ENCODE measurements at regions of chr9 and their contacts with region 1.

Region 1: DNA sequence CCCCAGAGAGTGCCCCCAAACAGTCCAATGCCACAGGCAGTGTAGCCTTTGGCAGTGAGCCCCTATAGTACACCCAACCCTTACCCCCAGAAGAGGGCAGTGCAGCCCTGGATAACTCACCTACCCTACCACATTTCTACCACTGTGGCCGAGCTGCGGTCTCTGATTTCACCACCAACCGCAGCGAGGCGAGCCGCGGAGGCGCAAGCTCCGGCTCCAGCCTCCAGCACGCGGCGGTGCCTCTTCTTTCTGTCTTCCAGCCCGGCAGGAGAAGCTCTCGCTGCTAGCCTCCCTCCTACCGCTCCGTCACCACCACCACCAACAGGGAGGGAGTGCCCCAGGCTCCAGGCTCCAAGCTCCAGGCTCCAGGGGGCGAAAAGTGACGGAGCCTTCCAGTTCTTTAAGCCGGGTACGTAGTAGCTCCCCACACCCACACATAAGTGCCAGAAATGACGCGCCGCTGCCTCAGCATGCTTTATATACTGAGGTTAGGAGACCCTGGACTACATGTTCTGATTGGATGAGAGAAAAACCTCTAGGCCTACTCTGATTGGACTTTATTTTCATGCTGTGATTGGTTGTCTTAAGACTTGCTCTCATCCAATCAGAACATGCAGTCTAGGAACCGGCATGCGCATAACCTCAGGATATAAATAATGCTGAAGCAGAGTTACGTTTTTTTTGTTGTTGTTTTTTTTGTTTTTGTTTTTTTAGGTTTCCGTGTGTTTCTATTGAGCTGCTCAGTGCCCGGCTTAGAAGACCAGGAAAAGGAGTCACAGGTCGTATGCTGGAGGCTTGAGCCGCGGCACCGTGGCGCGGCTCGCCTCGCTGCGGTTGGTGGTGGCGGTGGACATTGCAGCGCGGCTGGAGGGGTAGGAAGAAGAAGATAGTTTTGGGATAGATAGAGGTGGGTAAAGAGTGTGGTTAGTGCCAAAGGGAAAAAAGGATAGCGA is at the start of gene PCAT7:
- DNase-seq: peak; percentile 72 to 81 (median 74)
- ATAC-seq: peak; percentile 100
- H3K4me3 ChIP-seq: peak within 1 kb of the TSS; percentile 34
- H3K27ac ChIP-seq: no peak within 1 kb of the TSS
- H3K4me1 ChIP-seq: peaks cover 3 to 24% of the 10 kb centered on the region in 2 experiments; a peak in 4 of 5 replicates
- H3K27me3 ChIP-seq: peaks cover 19 to 35% of the 10 kb centered on the region in 2 experiments
- CTCF ChIP-seq: peak; percentile 80 to 89 (median 81)
- EP300 ChIP-seq: no peak
- POLR2A ChIP-seq: no peak
- RAD21 ChIP-seq: peak; percentile 70 to 87
- polyA plus RNA-seq, gene PCAT7: not detected

Region 2: GRCh38 chr9:93600504-93600903 is 954.2 kb before region 1 on chr9:
- CTCF ChIA-PET with region 1: no interaction called
- POLR2A ChIA-PET with region 1: no interaction called
- in situ Hi-C with region 1: no loop called
- intact Hi-C with region 1: no loop called
- DNase-seq: no peak
- ATAC-seq: peak; percentile 48
- H3K4me3 ChIP-seq: no peak overlapping the region
- H3K27ac ChIP-seq: no peak overlapping the region
- H3K4me1 ChIP-seq: peaks cover 11 to 14% of the 10 kb centered on the region in 2 experiments; a peak in 4 of 5 replicates
- H3K27me3 ChIP-seq: no peaks in the 10 kb centered on the region
- CTCF ChIP-seq: no peak
- EP300 ChIP-seq: no peak
- POLR2A ChIP-seq: no peak
- RAD21 ChIP-seq: no peak

Region 3: DNA sequence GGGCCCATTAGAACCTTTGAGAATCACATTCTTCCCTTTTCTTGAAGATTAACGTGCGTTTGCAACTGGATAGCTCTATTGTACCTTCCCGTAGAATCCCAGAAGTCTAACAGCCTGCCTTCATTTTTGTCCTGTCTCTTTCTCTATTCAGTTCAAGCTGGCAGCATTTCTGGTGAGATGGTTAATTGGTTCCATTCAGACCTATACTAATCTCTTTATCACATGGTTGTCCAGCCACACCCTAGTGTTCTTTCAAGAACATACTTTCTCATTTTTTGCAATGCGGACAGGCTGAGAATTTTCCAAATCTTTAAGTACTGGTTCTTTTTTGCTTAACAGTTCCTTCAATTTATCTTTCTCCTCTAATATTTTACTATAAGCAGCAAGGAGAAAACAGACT is 252.3 kb before region 1 on chr9:
- CTCF ChIA-PET with region 1: no interaction called
- POLR2A ChIA-PET with region 1: no interaction called
- in situ Hi-C with region 1: no loop called
- intact Hi-C with region 1: no loop called
- DNase-seq: peak in 1 of 4 experiments; percentile 9
- ATAC-seq: no peak
- H3K4me3 ChIP-seq: no peak overlapping the region
- H3K27ac ChIP-seq: no peak overlapping the region
- H3K4me1 ChIP-seq: peaks cover 24 to 47% of the 10 kb centered on the region in 2 experiments
- H3K27me3 ChIP-seq: no peaks in the 10 kb centered on the region
- CTCF ChIP-seq: no peak
- EP300 ChIP-seq: no peak
- POLR2A ChIP-seq: no peak
- RAD21 ChIP-seq: no peak

Region 4: DNA sequence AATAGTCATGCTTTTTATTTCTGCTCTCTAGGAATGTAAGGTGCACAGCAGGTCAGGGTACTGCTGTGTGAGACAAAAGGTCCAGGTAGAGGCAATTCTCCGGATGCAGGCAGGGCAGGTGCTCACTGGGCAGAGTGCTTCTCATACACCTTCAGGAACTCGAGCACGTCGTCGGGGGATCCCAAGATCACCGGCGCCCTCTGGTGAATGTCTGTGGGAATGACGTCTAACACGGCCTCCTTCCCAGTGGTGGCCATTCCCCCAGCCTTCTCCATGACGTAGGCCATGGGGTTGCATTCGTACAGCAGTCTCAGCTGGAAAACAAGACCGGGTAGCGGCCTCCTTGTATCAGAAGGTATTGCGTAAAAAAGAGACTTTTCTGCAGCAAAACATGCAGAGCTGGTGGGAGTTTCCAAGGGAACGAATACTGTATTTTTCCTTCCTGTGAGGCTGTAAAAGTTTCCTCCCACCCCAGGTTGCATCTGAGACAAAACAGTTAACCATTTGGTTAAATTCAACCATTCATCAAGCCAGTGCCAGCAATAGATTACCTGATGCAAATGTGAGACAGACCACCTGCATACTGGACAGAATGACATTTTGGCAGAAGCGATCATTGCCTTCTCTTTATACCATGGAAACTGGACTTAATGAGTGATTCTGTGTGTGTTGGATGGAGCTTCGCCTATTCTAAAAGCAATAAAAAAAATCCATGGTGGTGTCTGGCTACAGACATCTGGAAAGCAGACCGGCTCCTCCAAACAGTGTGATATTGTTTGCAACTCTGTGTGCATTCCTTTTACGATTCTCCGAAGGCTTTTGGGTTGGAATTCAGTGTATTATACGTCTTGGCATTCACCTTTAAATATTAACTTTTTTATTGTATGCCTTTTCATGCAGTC is 48.8 kb after region 1 on chr9:
- CTCF ChIA-PET with region 1: interaction called, 3 read pairs
- POLR2A ChIA-PET with region 1: no interaction called
- in situ Hi-C with region 1: no loop called
- intact Hi-C with region 1: loop called (anchors 1 kb)
- DNase-seq: peak; percentile 76 to 90 (median 87)
- ATAC-seq: peak; percentile 94
- H3K4me3 ChIP-seq: no peak overlapping the region
- H3K27ac ChIP-seq: no peak overlapping the region
- H3K4me1 ChIP-seq: 0 out of 5 replicates have a peak, but pooled peaks cover 0 to 3% of the 10 kb centered on the region in 2 experiments
- H3K27me3 ChIP-seq: peaks cover 35 to 73% of the 10 kb centered on the region in 2 experiments
- CTCF ChIP-seq: peak; percentile 77 to 84 (median 81)
- EP300 ChIP-seq: no peak
- POLR2A ChIP-seq: no peak
- RAD21 ChIP-seq: peak; percentile 69 to 86

Region 5: GRCh38 chr9:94623253-94623652 is 68.5 kb after region 1 on chr9:
- CTCF ChIA-PET with region 1: no interaction called
- POLR2A ChIA-PET with region 1: interaction called, 3 read pairs
- in situ Hi-C with region 1: no loop called
- intact Hi-C with region 1: loop called (anchors 1 kb)
- DNase-seq: peak; percentile 67 to 74 (median 68)
- ATAC-seq: peak; percentile 98
- H3K4me3 ChIP-seq: no peak overlapping the region
- H3K27ac ChIP-seq: no peak overlapping the region
- H3K4me1 ChIP-seq: peaks cover 0 to 10% of the 10 kb centered on the region in 2 experiments; a peak in 2 of 5 replicates
- H3K27me3 ChIP-seq: peaks cover 22 to 46% of the 10 kb centered on the region in 2 experiments
- CTCF ChIP-seq: peak; percentile 73 to 81 (median 81)
- EP300 ChIP-seq: no peak
- POLR2A ChIP-seq: no peak
- RAD21 ChIP-seq: peak in 1 of 2 experiments; percentile 65; a peak in 2 of 4 replicates

Region 6: GRCh38 chr9:95127249-95128176 is 572.8 kb after region 1 on chr9:
- CTCF ChIA-PET with region 1: interaction called, 4 read pairs
- POLR2A ChIA-PET with region 1: no interaction called
- in situ Hi-C with region 1: no loop called
- intact Hi-C with region 1: loop called (anchors 10 kb)
- DNase-seq: peak; percentile 81 to 82 (median 82)
- ATAC-seq: peak; percentile 99
- H3K4me3 ChIP-seq: no peak overlapping the region
- H3K27ac ChIP-seq: no peak overlapping the region
- H3K4me1 ChIP-seq: peaks cover 0 to 6% of the 10 kb centered on the region in 2 experiments; a peak in 2 of 5 replicates
- H3K27me3 ChIP-seq: no peaks in the 10 kb centered on the region
- CTCF ChIP-seq: peak; percentile 96 to 99 (median 99)
- EP300 ChIP-seq: no peak
- POLR2A ChIP-seq: no peak
- RAD21 ChIP-seq: peak; percentile 81 to 90

Region 7: DNA sequence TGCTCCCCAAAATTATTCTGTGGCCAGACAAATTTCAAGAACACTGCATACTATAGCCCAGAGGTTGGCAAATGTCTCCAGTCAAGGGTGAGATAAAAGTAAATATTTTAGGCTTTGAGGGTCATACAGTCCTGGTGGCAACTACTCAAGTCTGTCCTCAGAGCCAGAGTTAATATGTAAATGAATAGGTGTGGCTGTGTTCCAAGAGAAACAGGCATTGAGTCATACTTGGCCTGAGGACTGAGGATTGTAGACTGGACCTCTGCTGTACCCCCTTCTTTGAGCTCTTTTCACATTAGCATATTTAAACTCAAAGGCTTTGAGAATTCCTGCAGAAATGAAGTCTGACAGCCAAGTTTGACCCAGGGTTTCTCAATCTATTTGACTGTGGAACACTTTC is 1091.3 kb after region 1 on chr9:
- CTCF ChIA-PET with region 1: no interaction called
- POLR2A ChIA-PET with region 1: no interaction called
- in situ Hi-C with region 1: no loop called
- intact Hi-C with region 1: no loop called
- DNase-seq: no peak
- ATAC-seq: no peak
- H3K4me3 ChIP-seq: no peak overlapping the region
- H3K27ac ChIP-seq: no peak overlapping the region
- H3K4me1 ChIP-seq: no peaks in the 10 kb centered on the region
- H3K27me3 ChIP-seq: peaks cover 10 to 18% of the 10 kb centered on the region in 2 experiments; a peak in 4 of 5 replicates
- CTCF ChIP-seq: no peak
- EP300 ChIP-seq: no peak
- POLR2A ChIP-seq: no peak
- RAD21 ChIP-seq: no peak